ENCODE measurements at regions of chr7 and their contacts with region 1.

Region 1: DNA sequence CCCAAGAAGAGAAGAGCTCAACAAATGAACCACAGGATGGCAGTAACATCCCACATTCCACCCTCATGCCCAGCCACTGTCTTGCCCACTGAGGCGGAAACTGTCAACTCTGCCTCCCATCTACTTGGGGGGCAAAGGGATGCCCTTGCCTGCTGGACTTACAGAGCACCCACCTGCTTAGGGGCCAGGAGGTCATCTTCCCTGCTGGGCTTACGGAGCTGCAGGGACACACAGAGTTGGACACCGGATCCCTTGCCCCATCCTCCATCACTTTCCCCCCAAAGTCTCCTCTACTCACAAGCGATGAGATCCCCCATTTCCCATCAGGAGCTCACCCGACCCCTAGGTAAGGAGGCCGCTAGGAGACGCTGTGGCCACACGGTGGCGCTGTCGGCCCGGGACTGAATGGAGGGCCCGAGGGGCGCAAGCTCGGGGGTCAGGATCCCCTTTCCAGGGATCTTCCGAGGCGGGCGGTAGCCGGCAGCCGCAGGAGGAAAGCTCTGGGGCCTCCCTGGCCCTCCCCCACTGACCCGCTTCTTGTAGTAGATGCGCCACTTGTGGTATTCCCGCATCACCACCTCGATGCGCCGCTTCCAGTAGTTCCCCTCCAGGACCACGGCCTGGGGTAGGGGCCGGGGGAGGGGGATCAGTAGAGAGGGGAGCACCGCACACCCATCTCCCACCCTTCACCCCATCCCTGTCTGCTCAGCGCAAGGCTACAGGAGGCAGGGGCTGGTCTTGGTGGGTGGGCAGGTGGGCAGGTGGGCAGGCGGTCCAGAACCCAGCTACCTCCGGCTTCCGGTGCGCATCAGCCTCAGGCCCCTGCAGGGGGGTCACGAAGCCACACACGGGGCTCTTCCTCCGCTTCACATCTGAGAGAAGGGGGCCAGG is 17.3 kb downstream of the MLXIPL start:
- DNase-seq: peak; percentile 84
- H3K4me3 ChIP-seq: no peak overlapping the region
- H3K27ac ChIP-seq: no peak overlapping the region
- H3K4me1 ChIP-seq: no peaks in the 10 kb centered on the region
- H3K27me3 ChIP-seq: no peaks in the 10 kb centered on the region
- CTCF ChIP-seq: peak; percentile 97

Region 2: GRCh38 chr7:72444026-72444776 is 1162.8 kb before region 1 on chr7:
- CTCF ChIA-PET with region 1: no interaction called
- POLR2A ChIA-PET with region 1: no interaction called
- intact Hi-C with region 1: no loop called
- DNase-seq: no peak
- H3K4me3 ChIP-seq: no peak overlapping the region
- H3K27ac ChIP-seq: no peak overlapping the region
- H3K4me1 ChIP-seq: no peaks in the 10 kb centered on the region
- H3K27me3 ChIP-seq: peaks cover 43% of the 10 kb centered on the region
- CTCF ChIP-seq: no peak

Region 3: GRCh38 chr7:73470208-73470607 is 136.8 kb before region 1 on chr7:
- CTCF ChIA-PET with region 1: no interaction called
- POLR2A ChIA-PET with region 1: no interaction called
- intact Hi-C with region 1: no loop called
- DNase-seq: no peak
- H3K4me3 ChIP-seq: no peak overlapping the region
- H3K27ac ChIP-seq: no peak overlapping the region
- H3K4me1 ChIP-seq: no peaks in the 10 kb centered on the region
- H3K27me3 ChIP-seq: no peaks in the 10 kb centered on the region
- CTCF ChIP-seq: no peak

Region 4: DNA sequence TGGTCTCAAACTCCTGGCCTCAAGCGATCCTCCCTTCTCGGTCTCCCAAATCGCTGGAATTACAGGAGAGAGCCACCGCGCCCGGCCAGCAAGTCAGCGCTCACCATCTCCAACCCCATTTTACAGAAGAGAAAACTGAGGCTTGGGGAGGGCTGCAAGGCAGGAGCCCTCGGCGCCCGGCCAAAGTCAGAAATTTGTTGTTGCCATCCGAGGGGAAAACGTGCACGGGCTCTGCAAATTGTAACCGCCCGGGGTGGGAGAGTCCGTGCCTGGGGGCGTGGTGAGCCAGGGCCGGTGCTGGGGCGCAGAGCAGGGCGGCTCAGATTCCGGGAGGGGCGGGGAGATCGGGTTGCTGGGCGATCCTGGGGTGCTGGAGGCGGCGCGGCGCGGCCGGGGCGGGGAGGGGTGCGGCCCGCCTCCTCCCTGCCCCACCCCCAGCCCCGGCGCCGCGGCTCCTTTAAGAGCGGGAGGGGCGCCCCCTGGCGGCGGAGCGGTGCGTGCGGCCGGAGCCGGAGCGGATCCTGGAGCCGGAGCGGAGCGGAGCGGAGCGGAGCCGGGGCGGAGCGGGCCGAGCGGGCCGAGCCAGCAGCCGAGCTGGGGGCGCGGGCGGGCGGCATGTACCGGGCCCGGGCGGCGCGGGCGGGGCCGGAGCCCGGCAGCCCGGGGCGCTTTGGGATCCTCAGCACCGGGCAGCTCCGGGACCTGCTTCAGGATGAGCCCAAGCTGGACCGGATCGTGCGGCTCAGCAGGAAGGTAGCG is 60.5 kb after region 1 on chr7 and contains the start of gene VPS37D:
- CTCF ChIA-PET with region 1: interaction called, 4 read pairs
- POLR2A ChIA-PET with region 1: no interaction called
- intact Hi-C with region 1: loop called (anchors 5 kb)
- DNase-seq: peak; percentile 94
- H3K4me3 ChIP-seq: peak within 1 kb of the TSS; percentile 87
- H3K27ac ChIP-seq: peak within 1 kb of the TSS; percentile 68
- H3K4me1 ChIP-seq: peaks cover 6% of the 10 kb centered on the region
- H3K27me3 ChIP-seq: no peaks in the 10 kb centered on the region
- CTCF ChIP-seq: peak; percentile 64
- total RNA-seq, gene VPS37D: 8.7 and 10.1 TPM in 2 replicates

Region 5: DNA sequence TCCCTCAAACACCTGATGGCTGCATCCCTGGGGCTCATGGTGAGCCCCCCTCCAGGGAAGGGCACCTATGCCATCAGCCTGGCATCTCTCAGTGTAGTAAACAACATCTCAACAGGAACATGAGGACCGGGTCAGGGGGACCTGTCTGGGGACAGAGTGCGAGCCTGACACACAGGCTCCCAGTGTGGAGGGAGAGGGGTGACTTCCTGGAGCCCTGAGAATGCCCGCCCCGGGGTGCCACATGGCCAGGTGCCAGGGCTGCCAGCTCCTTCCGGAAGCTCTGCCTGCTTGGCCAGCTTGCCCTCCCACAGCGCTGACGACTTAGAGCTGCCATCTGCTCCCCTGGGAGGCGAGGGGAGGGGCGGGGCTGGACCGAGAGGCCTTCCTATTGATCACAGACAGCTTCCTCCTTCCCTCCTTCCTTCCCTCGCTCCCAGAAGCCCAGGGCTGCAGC is 100.1 kb after region 1 on chr7:
- CTCF ChIA-PET with region 1: interaction called, 12 read pairs
- POLR2A ChIA-PET with region 1: interaction called, 18 read pairs
- intact Hi-C with region 1: no loop called
- DNase-seq: peak; percentile 97
- H3K4me3 ChIP-seq: no peak overlapping the region
- H3K27ac ChIP-seq: peak overlapping the region; percentile 97
- H3K4me1 ChIP-seq: peaks cover 73% of the 10 kb centered on the region
- H3K27me3 ChIP-seq: no peaks in the 10 kb centered on the region
- CTCF ChIP-seq: no peak

Region 6: DNA sequence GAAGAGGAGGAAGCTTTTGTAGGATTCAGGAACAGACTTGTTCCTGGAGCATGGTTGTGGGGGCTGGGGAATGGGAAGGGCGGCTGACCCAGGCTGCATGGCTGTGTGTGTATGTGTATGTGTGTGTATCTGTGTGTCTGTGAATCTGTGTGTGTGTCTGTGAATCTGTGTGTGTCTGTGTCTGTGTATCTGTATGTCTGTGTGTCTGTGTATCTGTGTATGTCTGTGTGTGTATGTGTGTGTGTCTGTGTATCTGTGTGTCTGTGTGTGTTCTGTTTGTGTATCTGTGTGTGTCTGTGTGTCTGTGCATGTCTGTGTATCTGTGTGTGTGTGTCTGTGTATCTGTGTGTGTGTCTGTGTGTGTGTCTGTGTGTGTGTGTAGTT is 119.0 kb after region 1 on chr7:
- CTCF ChIA-PET with region 1: interaction called, 45 read pairs
- POLR2A ChIA-PET with region 1: no interaction called
- intact Hi-C with region 1: loop called (anchors 1 kb)
- DNase-seq: no peak
- H3K4me3 ChIP-seq: no peak overlapping the region
- H3K27ac ChIP-seq: no peak overlapping the region
- H3K4me1 ChIP-seq: peaks cover 7% of the 10 kb centered on the region
- H3K27me3 ChIP-seq: no peaks in the 10 kb centered on the region
- CTCF ChIP-seq: 0 out of 2 replicates have a peak, but pooled peaks have one; percentile 4

Region 7: GRCh38 chr7:73738612-73739374 is 131.7 kb after region 1 on chr7 and contains the start of gene ABHD11:
- CTCF ChIA-PET with region 1: interaction called, 41 read pairs
- POLR2A ChIA-PET with region 1: no interaction called
- intact Hi-C with region 1: no loop called
- DNase-seq: peak; percentile 94
- H3K4me3 ChIP-seq: peak within 1 kb of the TSS; percentile 72
- H3K27ac ChIP-seq: peak within 1 kb of the TSS; percentile 84
- H3K4me1 ChIP-seq: peaks cover 7% of the 10 kb centered on the region
- H3K27me3 ChIP-seq: no peaks in the 10 kb centered on the region
- CTCF ChIP-seq: no peak
- total RNA-seq, gene ABHD11: 20.7 and 22.9 TPM in 2 replicates

Region 8: GRCh38 chr7:73851410-73852234 is 244.6 kb after region 1 on chr7:
- CTCF ChIA-PET with region 1: interaction called, 5 read pairs
- POLR2A ChIA-PET with region 1: no interaction called
- intact Hi-C with region 1: loop called (anchors 10 kb)
- DNase-seq: peak; percentile 66
- H3K4me3 ChIP-seq: no peak overlapping the region
- H3K27ac ChIP-seq: no peak overlapping the region
- H3K4me1 ChIP-seq: peaks cover 7% of the 10 kb centered on the region
- H3K27me3 ChIP-seq: no peaks in the 10 kb centered on the region
- CTCF ChIP-seq: no peak

Region 9: DNA sequence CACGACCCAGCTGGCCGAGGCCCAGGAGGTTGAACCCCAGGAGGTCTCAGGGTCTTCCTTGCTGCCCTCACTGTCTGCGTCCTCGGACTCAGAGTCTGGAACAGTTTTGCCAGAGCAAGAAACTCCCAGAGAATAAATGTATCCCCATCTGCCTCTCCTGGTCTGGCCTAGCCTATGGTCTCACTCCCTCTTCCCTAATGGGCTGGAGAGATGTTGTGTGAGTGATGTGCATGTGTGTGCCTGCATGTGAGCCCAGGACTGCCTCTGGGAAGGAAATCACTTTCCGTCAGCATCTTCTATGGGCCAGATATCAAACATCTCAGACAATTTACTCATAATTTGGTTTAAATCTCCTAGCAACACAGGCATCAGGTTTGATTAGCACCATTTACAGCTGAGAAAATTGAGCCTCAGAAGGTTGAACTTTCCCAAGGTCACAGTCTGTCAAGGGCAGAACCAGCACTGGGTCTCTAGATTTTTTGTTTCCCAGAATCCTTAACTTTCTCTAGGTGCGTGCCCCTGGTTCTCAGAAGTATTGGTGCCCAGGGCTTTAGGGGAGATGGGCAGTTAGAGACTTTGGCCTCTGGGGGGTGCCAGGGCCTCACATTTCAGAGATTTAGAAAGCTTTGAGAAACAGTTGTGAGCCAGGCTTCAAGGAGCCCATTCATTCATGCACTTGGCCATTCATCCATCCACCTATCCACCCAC is 258.8 kb after region 1 on chr7:
- CTCF ChIA-PET with region 1: no interaction called
- POLR2A ChIA-PET with region 1: no interaction called
- intact Hi-C with region 1: no loop called
- DNase-seq: peak; percentile 58
- H3K4me3 ChIP-seq: no peak overlapping the region
- H3K27ac ChIP-seq: no peak overlapping the region
- H3K4me1 ChIP-seq: no peaks in the 10 kb centered on the region
- H3K27me3 ChIP-seq: no peaks in the 10 kb centered on the region
- CTCF ChIP-seq: peak; percentile 60

Region 10: GRCh38 chr7:74199551-74200242 is 592.7 kb after region 1 on chr7:
- CTCF ChIA-PET with region 1: no interaction called
- POLR2A ChIA-PET with region 1: no interaction called
- intact Hi-C with region 1: no loop called
- DNase-seq: no peak
- H3K4me3 ChIP-seq: no peak overlapping the region
- H3K27ac ChIP-seq: no peak overlapping the region
- H3K4me1 ChIP-seq: no peaks in the 10 kb centered on the region
- H3K27me3 ChIP-seq: no peaks in the 10 kb centered on the region
- CTCF ChIP-seq: no peak

Region 11: DNA sequence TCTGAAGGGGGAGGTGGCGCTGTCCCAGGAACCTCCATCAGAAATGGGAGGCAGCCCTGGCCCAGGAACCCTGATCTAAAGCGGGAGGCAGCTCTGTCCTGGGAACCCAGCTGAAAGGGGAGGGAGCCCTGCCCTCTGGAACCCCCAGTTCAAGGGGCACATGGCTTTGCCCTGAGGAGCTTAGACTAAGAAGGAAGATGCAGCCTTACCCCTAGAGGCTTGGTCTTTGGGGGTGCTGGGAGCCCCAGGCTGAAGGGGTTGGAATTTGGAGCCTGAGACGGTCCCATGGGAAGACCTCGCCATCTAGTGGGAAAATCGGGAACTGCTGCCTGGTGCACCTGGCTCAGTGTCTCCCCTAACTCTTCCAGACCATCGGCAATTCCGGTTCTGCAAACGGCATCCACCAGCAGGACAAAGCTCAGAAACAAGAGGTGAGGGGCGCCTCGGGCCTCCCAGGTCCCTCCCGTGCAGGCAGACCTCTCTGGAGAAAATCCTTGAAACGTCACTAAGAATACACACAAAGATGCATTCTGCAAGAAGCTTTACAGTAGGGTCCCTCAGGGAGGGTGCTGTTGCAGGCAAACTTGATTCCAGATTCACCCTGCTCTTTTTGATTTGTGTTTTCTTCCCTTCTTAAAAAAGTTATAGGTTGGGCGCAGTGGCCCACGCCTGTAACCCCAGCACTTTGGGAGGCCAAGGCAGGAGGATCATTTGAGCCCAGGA is 794.3 kb after region 1 on chr7:
- CTCF ChIA-PET with region 1: interaction called, 10 read pairs
- POLR2A ChIA-PET with region 1: no interaction called
- intact Hi-C with region 1: no loop called
- DNase-seq: peak; percentile 80
- H3K4me3 ChIP-seq: no peak overlapping the region
- H3K27ac ChIP-seq: no peak overlapping the region
- H3K4me1 ChIP-seq: no peaks in the 10 kb centered on the region
- H3K27me3 ChIP-seq: no peaks in the 10 kb centered on the region
- CTCF ChIP-seq: peak; percentile 98